ENCODE measurements at regions of chr15 and their contacts with region 1.

Region 1: GRCh38 chr15:68154923-68155559 is 50.1 kb downstream of the CALML4 start:
- DNase-seq: peak in 1 of 2 experiments; percentile 25
- H3K4me3 ChIP-seq: no peak overlapping the region
- H3K27ac ChIP-seq: no peak overlapping the region
- H3K4me1 ChIP-seq: no peaks in the 10 kb centered on the region
- H3K27me3 ChIP-seq: no peaks in the 10 kb centered on the region
- CTCF ChIP-seq: peak; percentile 70

Region 2: DNA sequence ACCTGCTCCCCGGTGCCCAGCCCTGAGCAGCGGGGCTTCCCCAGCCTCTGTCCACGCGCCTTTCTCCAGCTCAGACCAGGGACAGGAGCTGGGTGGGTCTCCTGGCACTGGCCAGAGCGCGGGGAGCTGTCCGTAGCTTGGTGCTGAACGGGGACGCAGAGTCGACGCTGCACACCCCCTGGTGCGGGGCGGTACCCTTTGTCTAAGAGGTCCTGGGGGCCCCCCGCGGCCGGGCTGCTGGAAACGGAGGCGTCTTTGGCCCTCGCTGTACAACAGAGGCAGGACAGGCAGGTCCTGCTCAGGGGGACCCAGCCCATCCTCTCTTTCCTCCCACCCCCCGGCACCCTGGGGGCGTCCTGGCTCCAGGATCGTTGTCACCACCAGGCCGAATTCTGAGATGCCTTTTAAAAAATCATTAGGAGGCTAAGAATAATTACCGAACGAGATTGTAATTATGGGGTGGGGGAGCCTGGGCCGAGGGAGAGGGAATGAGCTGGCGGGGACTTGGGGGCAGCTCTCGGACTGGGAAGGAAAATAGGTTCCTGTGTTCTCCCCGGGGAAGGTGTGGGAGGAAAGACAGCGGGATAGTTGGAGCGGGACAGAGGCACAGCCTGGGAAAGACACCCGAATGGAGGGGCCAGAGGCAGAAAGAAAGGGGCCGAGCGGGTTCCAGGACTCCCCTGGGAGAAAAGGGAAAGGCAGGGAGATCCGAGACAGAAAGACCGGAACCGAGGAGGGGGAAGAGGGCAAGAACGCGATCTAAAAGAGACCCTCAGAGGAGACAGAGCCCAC is 333.9 kb before region 1 on chr15:
- CTCF ChIA-PET with region 1: no interaction called
- POLR2A ChIA-PET with region 1: interaction called, 14 read pairs
- intact Hi-C with region 1: no loop called
- DNase-seq: no peak
- H3K4me3 ChIP-seq: no peak overlapping the region
- H3K27ac ChIP-seq: no peak overlapping the region
- H3K4me1 ChIP-seq: no peaks in the 10 kb centered on the region
- H3K27me3 ChIP-seq: no peaks in the 10 kb centered on the region
- CTCF ChIP-seq: no peak

Region 3: GRCh38 chr15:67863442-67863987 is 291.5 kb before region 1 on chr15:
- CTCF ChIA-PET with region 1: interaction called, 11 read pairs
- POLR2A ChIA-PET with region 1: no interaction called
- intact Hi-C with region 1: loop called (anchors 1 kb)
- DNase-seq: peak; percentile 39 to 72
- H3K4me3 ChIP-seq: peak overlapping the region; percentile 58; the same call in 1 of the 2 replicates
- H3K27ac ChIP-seq: no peak overlapping the region
- H3K4me1 ChIP-seq: no peaks in the 10 kb centered on the region
- H3K27me3 ChIP-seq: no peaks in the 10 kb centered on the region
- CTCF ChIP-seq: peak; percentile 86

Region 4: DNA sequence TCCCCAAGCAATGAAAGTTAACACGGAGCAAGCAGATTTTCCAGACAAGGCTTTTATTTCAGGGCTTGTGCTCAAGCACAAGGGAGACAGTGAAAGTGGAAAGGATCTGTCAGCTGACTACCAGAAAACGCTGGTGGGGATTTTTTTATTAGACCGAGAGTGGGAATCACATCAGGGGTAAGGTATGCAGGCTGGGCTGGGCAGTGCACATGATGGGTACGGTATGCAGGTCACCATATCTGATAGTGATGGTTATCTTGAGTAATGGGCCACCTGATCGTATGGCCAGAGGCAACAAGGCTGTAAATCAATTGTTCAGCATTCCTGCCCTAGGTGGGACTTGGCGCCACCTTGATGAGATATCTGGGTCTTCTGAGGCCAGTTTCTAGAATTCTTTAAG is 137.8 kb before region 1 on chr15:
- CTCF ChIA-PET with region 1: no interaction called
- POLR2A ChIA-PET with region 1: no interaction called
- intact Hi-C with region 1: loop called (anchors 10 kb)
- DNase-seq: peak; percentile 64 to 84
- H3K4me3 ChIP-seq: no peak overlapping the region
- H3K27ac ChIP-seq: peak overlapping the region; percentile 39; the same call in 1 of the 2 replicates
- H3K4me1 ChIP-seq: 0 out of 2 replicates have a peak, but pooled peaks cover 9% of the 10 kb centered on the region
- H3K27me3 ChIP-seq: no peaks in the 10 kb centered on the region
- CTCF ChIP-seq: no peak

Region 5: GRCh38 chr15:68183616-68184315 is 28.7 kb after region 1 on chr15:
- CTCF ChIA-PET with region 1: interaction called, 20 read pairs
- POLR2A ChIA-PET with region 1: no interaction called
- intact Hi-C with region 1: no loop called
- DNase-seq: no peak
- H3K4me3 ChIP-seq: no peak overlapping the region
- H3K27ac ChIP-seq: no peak overlapping the region
- H3K4me1 ChIP-seq: no peaks in the 10 kb centered on the region
- H3K27me3 ChIP-seq: no peaks in the 10 kb centered on the region
- CTCF ChIP-seq: no peak

Region 6: DNA sequence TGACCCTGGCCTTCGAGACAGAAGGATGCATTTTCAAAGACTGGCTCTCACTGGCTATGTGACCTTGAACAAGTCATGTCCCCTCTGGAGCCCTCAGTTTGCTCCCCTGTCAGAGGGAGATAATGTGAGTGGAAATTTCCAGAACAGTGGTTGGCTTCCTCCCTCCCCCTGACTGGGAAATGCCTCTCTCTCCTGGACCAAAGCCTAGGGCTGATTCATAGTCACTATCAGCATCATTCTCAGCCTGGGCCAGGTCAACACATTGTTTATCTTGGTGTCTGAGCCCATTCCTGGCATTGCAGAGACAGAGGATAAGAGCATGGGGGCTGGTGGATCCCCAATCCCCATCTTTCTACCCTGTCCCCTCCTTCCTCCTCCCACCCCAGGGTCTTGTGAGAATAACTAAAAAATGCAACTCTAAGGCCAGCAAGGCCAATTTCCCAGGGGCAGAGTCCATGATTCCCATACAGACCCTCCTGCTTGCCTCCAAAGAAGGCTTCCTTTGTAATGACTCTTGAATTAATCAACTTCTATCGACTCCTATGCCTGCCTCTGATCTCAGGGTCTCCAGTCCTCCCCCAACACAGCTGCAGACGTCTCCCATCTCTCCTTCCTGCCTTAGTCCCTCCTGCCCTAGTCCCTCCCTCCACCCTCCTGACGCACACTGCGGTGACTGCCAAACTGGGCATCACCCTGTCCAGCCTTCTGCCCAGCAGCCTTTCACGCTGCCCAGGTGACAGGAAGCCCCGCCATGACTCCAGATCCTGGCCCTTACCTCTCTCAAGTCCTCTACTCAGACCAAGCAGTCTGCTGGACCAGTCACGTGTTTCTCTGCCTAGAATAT is 388.3 kb after region 1 on chr15:
- CTCF ChIA-PET with region 1: no interaction called
- POLR2A ChIA-PET with region 1: no interaction called
- intact Hi-C with region 1: no loop called
- DNase-seq: no peak
- H3K4me3 ChIP-seq: no peak overlapping the region
- H3K27ac ChIP-seq: no peak overlapping the region
- H3K4me1 ChIP-seq: no peaks in the 10 kb centered on the region
- H3K27me3 ChIP-seq: no peaks in the 10 kb centered on the region
- CTCF ChIP-seq: no peak

Region 7: DNA sequence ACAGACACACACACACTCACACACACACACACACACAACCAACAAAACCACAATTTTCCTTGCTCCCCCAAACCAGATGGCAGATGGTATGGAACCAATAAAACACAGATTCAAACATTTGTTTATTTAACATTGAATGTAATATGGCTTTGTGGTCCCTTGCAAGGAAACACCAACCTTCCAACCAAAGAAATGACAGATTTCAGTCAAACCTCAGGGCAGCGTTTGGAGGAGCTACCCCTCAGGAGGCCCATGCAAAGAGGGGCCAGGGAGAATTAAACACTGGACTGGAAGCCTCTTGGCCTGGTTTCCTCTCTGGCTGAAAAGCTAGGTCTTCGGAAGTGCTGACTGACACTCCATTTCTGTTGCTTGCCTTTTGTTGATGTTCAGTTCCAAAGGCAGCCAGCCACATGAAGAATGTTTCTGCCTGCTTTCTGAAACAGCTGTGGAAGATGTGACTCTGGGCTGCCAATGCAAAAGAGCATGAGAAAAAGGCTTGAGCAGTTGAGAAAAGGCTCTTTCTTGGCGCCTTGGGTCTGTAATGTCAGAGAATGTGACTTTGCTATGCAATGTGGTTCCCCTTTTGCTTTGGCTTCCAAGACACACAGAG is 1593.6 kb after region 1 on chr15:
- CTCF ChIA-PET with region 1: no interaction called
- POLR2A ChIA-PET with region 1: no interaction called
- intact Hi-C with region 1: no loop called
- DNase-seq: no peak
- H3K4me3 ChIP-seq: no peak overlapping the region
- H3K27ac ChIP-seq: no peak overlapping the region
- H3K4me1 ChIP-seq: no peaks in the 10 kb centered on the region
- H3K27me3 ChIP-seq: no peaks in the 10 kb centered on the region
- CTCF ChIP-seq: no peak

Measured in PC-9 (cell line).